ENCODE measurements at regions of chr10 and their contacts with region 1.

Region 1: GRCh38 chr10:100569618-100570473 is 34.1 kb downstream of the HIF1AN start:
- DNase-seq: peak in 1 of 2 experiments; percentile 71
- H3K4me3 ChIP-seq: peak overlapping the region; percentile 52 to 78 (median 67)
- H3K27ac ChIP-seq: no peak overlapping the region
- H3K4me1 ChIP-seq: peaks cover 0 to 4% (median 2%) of the 10 kb centered on the region in 4 experiments; a peak in 4 of 7 replicates
- H3K27me3 ChIP-seq: peaks cover 0 to 24% (median 10%) of the 10 kb centered on the region in 4 experiments; a peak in 6 of 7 replicates
- CTCF ChIP-seq: peak; percentile 78 to 88 (median 83)
- EP300 ChIP-seq: no peak; a peak in 1 of 3 replicates
- POLR2A ChIP-seq: no peak
- RAD21 ChIP-seq: peak; percentile 49 to 72

Region 2: GRCh38 chr10:100551196-100551595 is 18.6 kb before region 1 on chr10:
- CTCF ChIA-PET with region 1: interaction called, 16 read pairs
- POLR2A ChIA-PET with region 1: interaction called, 21 read pairs
- DNase-seq: no peak
- H3K4me3 ChIP-seq: no peak overlapping the region
- H3K27ac ChIP-seq: no peak overlapping the region
- H3K4me1 ChIP-seq: no peaks in the 10 kb centered on the region
- H3K27me3 ChIP-seq: no peaks in the 10 kb centered on the region
- CTCF ChIP-seq: no peak
- EP300 ChIP-seq: no peak
- POLR2A ChIP-seq: no peak
- RAD21 ChIP-seq: no peak

Region 3: DNA sequence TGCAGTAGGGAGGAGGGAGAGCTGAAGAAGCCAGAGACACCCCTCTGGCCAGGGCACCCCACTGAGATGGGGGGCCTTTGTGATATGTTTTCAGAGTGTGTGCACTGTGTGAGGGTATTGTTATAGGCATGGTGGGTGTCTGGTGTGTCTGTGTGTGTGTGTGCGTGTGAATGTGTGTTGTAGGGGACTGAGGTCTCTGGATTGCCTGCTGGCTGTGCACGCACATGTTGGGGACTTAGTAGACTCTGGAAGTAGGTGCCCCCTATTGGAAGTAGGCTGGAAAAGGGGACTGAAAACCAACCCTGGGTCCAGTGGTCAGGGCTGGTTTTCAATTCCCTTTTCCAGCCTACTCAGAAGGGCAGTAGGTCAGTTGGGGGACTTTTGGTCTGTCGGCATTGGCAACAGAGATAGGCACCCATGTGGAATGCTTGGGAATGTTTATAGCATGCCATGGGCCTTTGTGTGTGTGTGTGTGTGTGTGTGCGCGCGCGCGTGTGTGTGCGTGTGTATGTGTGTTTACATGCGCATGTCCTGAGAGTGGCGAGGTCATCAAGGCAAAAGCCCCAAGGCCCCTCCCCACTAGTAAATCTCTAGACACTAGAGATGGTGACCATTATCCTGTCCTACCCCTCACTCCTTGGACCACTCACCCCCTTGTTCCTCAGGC is 44.7 kb after region 1 on chr10:
- CTCF ChIA-PET with region 1: interaction called, 11 read pairs
- POLR2A ChIA-PET with region 1: interaction called, 3 read pairs
- DNase-seq: no peak
- H3K4me3 ChIP-seq: no peak overlapping the region
- H3K27ac ChIP-seq: no peak overlapping the region
- H3K4me1 ChIP-seq: no peaks in the 10 kb centered on the region; a peak in 1 of 7 replicates
- H3K27me3 ChIP-seq: no peaks in the 10 kb centered on the region; a peak in 1 of 7 replicates
- CTCF ChIP-seq: peak; percentile 9 to 40 (median 10); a peak in 2 of 4 replicates
- EP300 ChIP-seq: no peak
- POLR2A ChIP-seq: no peak
- RAD21 ChIP-seq: no peak; a peak in 1 of 4 replicates

Region 4: DNA sequence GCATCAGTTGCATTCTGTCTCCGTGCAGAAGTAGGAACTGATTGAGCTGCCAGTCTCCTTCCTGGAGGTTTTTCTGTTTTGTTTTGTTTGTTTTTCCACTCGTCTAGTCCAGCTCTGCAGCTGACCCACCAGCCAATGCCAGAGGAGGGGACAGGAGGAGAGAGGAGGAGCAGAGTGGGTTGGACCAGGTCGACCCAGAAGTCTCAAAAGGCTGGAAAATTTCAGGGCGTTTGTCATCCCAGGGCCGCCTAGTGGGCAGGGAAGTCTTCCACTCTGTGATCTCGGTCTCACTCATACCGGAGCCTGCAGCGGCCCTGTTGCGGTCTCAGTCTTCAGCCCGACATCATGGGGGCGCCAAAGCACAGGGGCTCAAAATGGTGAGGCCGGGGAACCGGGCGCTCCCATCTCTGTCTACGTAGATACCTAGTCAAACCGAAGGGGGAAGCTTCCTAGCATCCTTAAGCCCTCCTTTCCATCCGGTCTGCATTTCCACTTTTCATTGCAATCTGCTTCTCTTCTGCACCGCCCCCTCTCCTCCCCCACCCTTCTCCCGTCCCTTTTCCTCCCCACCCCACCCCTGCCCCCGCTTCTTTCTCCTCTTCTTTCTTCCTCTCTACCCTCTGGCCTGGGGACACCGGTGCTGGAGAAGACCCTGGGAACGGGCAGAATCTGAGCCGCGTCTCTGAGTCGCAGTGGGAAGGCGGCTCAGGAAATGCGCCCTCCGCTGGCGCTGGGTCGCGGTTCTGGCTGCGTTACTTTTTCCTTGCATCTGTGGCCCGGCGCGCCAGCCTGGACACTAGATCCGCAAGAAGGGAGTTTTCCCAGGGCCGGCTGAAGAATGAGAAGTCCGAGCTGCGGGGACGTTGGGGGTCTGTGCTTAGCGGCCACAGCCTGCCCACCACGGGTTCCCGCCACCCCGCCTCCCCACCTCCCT is 159.3 kb after region 1 on chr10:
- CTCF ChIA-PET with region 1: interaction called, 24 read pairs
- POLR2A ChIA-PET with region 1: no interaction called
- DNase-seq: peak in 1 of 2 experiments; percentile 79
- H3K4me3 ChIP-seq: peak overlapping the region in 1 of 4 experiments; percentile 48; a peak in 2 of 8 replicates
- H3K27ac ChIP-seq: no peak overlapping the region
- H3K4me1 ChIP-seq: peaks cover 4 to 20% (median 11%) of the 10 kb centered on the region in 4 experiments
- H3K27me3 ChIP-seq: peaks cover 94 to 99% (median 97%) of the 10 kb centered on the region in 4 experiments
- CTCF ChIP-seq: peak; percentile 58 to 72 (median 69)
- EP300 ChIP-seq: no peak
- POLR2A ChIP-seq: no peak
- RAD21 ChIP-seq: peak; percentile 50 to 64

Region 5: DNA sequence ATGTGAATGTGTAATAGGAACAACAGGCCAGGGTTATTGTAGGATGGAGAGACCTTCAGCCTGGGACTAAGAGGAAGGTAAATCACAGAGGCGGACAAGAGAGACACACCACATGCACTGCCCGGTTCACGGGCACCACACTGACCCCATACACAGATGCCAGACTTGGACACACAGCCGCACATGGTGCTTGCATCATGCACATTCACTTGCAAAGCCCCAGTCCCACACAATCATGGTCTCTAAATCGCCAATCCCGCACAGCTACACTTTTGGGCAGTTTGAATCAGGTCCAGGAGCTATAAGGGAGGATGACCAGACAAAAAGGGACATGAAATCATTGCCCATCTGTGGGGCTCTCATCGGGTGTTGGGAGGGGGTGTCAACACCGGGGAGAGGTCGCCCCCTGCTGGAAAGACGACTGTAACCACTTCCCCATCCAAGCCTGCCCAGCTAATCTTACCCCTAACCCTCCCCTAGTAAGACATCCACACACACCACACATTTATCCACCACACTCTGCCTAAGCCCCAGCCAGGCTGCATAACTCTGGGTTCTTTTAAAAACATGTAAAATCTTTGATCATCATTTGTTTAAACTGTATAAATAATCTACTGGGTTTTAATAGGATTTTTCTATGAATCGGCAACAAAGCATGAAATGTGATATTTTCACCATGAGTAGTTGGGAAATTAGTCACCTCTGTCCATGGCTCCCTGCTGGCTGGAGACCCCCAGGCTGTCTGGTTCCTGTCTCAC is 302.4 kb after region 1 on chr10:
- CTCF ChIA-PET with region 1: interaction called, 81 read pairs
- POLR2A ChIA-PET with region 1: no interaction called
- DNase-seq: peak; percentile 27 to 92
- H3K4me3 ChIP-seq: no peak overlapping the region
- H3K27ac ChIP-seq: no peak overlapping the region
- H3K4me1 ChIP-seq: peaks cover 0 to 12% (median 7%) of the 10 kb centered on the region in 4 experiments; a peak in 5 of 7 replicates
- H3K27me3 ChIP-seq: peaks cover 0 to 29% (median 17%) of the 10 kb centered on the region in 4 experiments; a peak in 6 of 7 replicates
- CTCF ChIP-seq: peak; percentile 69 to 86 (median 84)
- EP300 ChIP-seq: no peak
- POLR2A ChIP-seq: no peak
- RAD21 ChIP-seq: peak; percentile 84 to 85

Region 6: DNA sequence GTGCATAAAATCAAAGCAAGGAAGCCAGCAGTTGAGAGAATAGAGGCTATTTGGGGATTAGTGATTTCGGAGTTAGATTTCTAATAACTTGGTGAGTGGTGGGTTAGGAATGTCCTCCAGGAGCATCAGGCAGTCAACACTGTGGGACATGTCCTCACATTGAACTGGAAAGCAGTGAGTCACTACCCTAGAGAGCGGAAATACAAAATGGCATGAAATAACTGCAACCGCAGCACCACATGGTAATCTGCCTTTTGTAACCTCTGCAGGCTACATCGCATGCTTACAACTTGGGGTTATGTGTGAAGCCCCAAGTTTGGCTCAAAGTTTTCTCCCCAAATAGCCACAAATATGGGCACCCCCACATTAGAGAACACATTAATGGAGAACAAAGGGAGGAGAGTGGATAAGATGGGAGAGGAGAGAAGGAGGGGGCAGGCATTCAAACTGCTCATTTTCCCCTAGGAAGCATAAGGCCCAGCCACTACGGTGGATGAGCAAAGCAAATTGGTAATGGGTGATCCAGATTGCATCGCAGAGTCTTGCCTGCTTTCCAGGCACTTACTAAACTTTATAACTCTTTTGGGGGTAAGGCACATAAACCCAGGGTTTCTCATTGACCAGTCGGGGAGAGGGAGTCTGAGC is 320.9 kb after region 1 on chr10:
- CTCF ChIA-PET with region 1: interaction called, 14 read pairs
- POLR2A ChIA-PET with region 1: no interaction called
- DNase-seq: peak in 1 of 2 experiments; percentile 33
- H3K4me3 ChIP-seq: no peak overlapping the region
- H3K27ac ChIP-seq: no peak overlapping the region
- H3K4me1 ChIP-seq: peaks cover 0 to 8% (median 3%) of the 10 kb centered on the region in 4 experiments; a peak in 3 of 7 replicates
- H3K27me3 ChIP-seq: no peaks in the 10 kb centered on the region
- CTCF ChIP-seq: no peak
- EP300 ChIP-seq: no peak
- POLR2A ChIP-seq: no peak
- RAD21 ChIP-seq: no peak

Measured in H1 (cell line).